Heart left ventricle (tissue), 16 donors: ENCODE measurements at regions of chr2 and their contacts with region 1.

Region 1: GRCh38 chr2:131093006-131093695 is at the start of gene FAM168B:
- DNase-seq: peak; percentile 90 to 95 (median 93)
- ATAC-seq: peak; percentile 94 to 98 (median 97)
- H3K4me3 ChIP-seq: peak within 1 kb of the TSS; percentile 52 to 99 (median 86)
- H3K27ac ChIP-seq: peak within 1 kb of the TSS; percentile 84 to 99 (median 98)
- H3K4me1 ChIP-seq: peaks cover 0 to 22% (median 16%) of the 10 kb centered on the region in 12 donors
- H3K27me3 ChIP-seq: no peaks in the 10 kb centered on the region
- CTCF ChIP-seq: no peak
- POLR2A ChIP-seq: peak; percentile 58 to 88
- total RNA-seq, gene FAM168B: 72.7 to 174 (median 86.9) TPM

Region 2: GRCh38 chr2:129914538-129915302 is 1178.4 kb before region 1 on chr2:
- intact Hi-C with region 1: no loop called
- DNase-seq: no peak
- ATAC-seq: no peak
- H3K4me3 ChIP-seq: no peak overlapping the region
- H3K27ac ChIP-seq: no peak overlapping the region
- H3K4me1 ChIP-seq: no peaks in the 10 kb centered on the region
- H3K27me3 ChIP-seq: peaks cover 0 to 4% (median 0%) of the 10 kb centered on the region in 9 donors
- CTCF ChIP-seq: no peak
- POLR2A ChIP-seq: no peak

Region 3: GRCh38 chr2:131105156-131105949 is 12.2 kb after region 1 on chr2 and contains the start of gene PLEKHB2:
- intact Hi-C with region 1: loop called in 3 of 10 experiments (anchors 1 kb)
- DNase-seq: peak; percentile 93 to 97 (median 94)
- ATAC-seq: peak; percentile 80 to 92 (median 89)
- H3K4me3 ChIP-seq: peak within 1 kb of the TSS; percentile 81 to 100 (median 96)
- H3K27ac ChIP-seq: peak within 1 kb of the TSS; percentile 79 to 99 (median 92)
- H3K4me1 ChIP-seq: peaks cover 0 to 35% (median 22%) of the 10 kb centered on the region in 12 donors
- H3K27me3 ChIP-seq: no peaks in the 10 kb centered on the region
- CTCF ChIP-seq: peak in 8 of 12 donors; percentile 10 to 56 (median 34)
- POLR2A ChIP-seq: peak; percentile 27 to 83
- total RNA-seq, gene PLEKHB2: 29.8 to 59.7 (median 42.2) TPM